ENCODE measurements at regions of chr14 and their contacts with region 1.

Region 1: DNA sequence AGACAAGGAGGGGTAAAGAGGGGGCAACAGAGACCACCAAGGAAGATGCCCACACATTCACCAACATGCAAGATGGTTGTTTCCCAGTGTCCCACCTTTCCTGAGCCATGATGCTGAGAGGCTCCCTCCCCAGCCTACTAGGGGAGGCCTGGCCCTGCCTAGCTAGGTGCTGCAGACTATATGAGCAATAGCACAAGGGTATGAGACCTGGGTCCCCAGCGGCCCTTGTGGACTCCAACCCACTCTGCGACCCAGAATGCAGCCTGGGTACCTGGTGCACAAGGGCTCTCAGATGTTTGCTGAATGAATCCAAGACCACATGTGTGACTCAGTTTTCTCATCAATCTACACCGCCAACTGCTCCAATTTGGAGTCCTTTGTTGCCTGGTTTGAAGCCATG is 13.9 kb downstream of the TGFB3 start:
- DNase-seq: no peak
- ATAC-seq: no peak
- H3K4me3 Mint-ChIP-seq: no peak overlapping the region
- H3K27ac Mint-ChIP-seq: no peak overlapping the region
- H3K4me1 Mint-ChIP-seq: no peaks in the 10 kb centered on the region
- H3K27me3 Mint-ChIP-seq: no peaks in the 10 kb centered on the region

Region 2: DNA sequence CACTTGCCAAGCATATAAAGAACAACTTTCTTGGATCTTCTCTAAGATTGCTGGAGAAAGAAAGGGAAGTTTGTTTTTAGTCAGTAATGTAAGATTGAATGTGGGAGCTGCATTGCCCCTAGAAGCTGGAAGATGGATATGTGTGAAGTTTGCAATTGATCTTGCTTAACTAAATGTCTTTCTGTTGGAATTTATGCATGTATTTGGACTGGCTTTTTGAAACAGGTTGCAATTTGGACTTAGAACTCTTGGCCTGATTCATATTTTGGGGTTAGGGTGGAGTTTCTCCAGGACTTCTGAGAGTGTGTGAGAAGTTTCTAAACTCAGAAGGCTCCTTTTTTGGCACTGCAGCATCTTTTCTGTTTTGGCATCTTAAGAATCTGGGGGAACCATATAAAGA is 44.1 kb after region 1 on chr14:
- CTCF ChIA-PET with region 1: no interaction called
- POLR2A ChIA-PET with region 1: no interaction called
- intact Hi-C with region 1: loop called in 1 of 2 experiments (anchors 2 kb)
- DNase-seq: no peak
- ATAC-seq: no peak
- H3K4me3 Mint-ChIP-seq: no peak overlapping the region
- H3K27ac Mint-ChIP-seq: no peak overlapping the region
- H3K4me1 Mint-ChIP-seq: no peaks in the 10 kb centered on the region
- H3K27me3 Mint-ChIP-seq: no peaks in the 10 kb centered on the region